Dorsolateral prefrontal cortex (tissue), 120 donors: ENCODE measurements at regions of chr3 and their contacts with region 1.

Region 1: GRCh38 chr3:52238761-52239701 is at the start of gene TWF2:
- DNase-seq: peak; percentile 62 to 92 (median 82)
- H3K4me3 ChIP-seq: peak within 1 kb of the TSS; percentile 75 to 99 (median 94)
- H3K27ac ChIP-seq: peak within 1 kb of the TSS; percentile 65 to 97 (median 91)
- H3K27me3 ChIP-seq: no peaks in the 10 kb centered on the region
- CTCF ChIP-seq: peak in 48 of 56 donors; percentile 13 to 55 (median 40)
- total RNA-seq, gene TWF2: 20.8 to 63.7 (median 47.3) TPM

Region 2: DNA sequence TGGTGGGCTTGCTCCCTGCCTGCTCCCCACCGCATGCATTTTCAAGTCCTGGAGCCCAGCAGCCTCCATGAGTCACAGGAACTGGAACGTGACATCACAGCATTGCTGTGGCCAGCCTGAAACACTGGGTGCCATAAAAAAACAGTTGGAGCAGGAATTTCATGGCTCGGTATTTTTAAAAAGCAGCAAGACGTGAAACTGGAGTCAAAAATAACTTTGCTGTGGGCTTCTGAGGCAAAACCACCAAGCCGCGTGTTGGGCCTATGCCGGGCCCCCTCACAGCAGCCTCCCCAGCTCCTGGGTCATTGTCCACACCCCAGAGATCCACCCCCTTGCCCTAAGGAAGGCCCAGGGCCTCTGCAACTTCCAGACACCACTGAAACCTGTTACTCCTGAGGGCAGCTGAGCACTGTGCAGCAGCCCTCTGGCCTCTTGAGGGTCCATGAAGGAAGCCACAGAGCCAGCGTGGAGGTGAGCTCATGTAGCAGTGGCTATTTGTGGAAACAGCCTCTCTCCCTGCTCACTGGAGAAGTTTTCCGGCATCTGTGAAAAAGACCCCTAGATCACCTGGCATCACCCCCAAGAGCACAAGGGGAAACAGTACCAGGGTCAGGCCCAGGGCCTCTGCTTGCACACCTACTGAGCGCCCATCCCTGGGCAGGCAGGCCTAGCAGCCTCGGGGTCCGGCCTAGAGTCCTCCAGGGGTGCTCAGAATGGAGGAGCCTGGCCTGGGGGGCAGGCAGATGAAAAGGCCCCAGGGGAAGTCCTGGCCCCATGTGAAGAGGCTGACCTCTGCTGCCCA is 148.7 kb before region 1 on chr3:
- intact Hi-C with region 1: no loop called
- DNase-seq: peak in 4 of 10 donors; percentile 37 to 77 (median 63)
- H3K4me3 ChIP-seq: no peak overlapping the region
- H3K27ac ChIP-seq: peak overlapping the region; percentile 11 to 93 (median 80)
- H3K27me3 ChIP-seq: no peaks in the 10 kb centered on the region
- CTCF ChIP-seq: no peak

Region 3: GRCh38 chr3:52121464-52121805 is 117.6 kb before region 1 on chr3:
- intact Hi-C with region 1: no loop called
- DNase-seq: no peak
- H3K4me3 ChIP-seq: no peak overlapping the region
- H3K27ac ChIP-seq: peak overlapping the region in 45 of 59 donors; percentile 21 to 98 (median 92)
- H3K27me3 ChIP-seq: no peaks in the 10 kb centered on the region
- CTCF ChIP-seq: no peak

Region 4: GRCh38 chr3:52181543-52181942 is 57.5 kb before region 1 on chr3:
- intact Hi-C with region 1: no loop called
- DNase-seq: no peak
- H3K4me3 ChIP-seq: no peak overlapping the region
- H3K27ac ChIP-seq: no peak overlapping the region
- H3K27me3 ChIP-seq: no peaks in the 10 kb centered on the region
- CTCF ChIP-seq: no peak

Region 5: GRCh38 chr3:52278510-52279069 is 39.6 kb after region 1 on chr3 and contains the start of gene WDR82:
- intact Hi-C with region 1: loop called (anchors 2 to 5 kb)
- DNase-seq: peak; percentile 91 to 99 (median 98)
- H3K4me3 ChIP-seq: peak within 1 kb of the TSS; percentile 70 to 99 (median 93)
- H3K27ac ChIP-seq: peak within 1 kb of the TSS; percentile 86 to 99 (median 96)
- H3K27me3 ChIP-seq: no peaks in the 10 kb centered on the region
- CTCF ChIP-seq: peak in 51 of 56 donors; percentile 24 to 69 (median 46)
- total RNA-seq, gene WDR82: 61.0 to 123 (median 91.2) TPM

Region 6: GRCh38 chr3:52313774-52314188 is 74.8 kb after region 1 on chr3:
- intact Hi-C with region 1: no loop called
- DNase-seq: no peak
- H3K4me3 ChIP-seq: no peak overlapping the region
- H3K27ac ChIP-seq: peak overlapping the region in 16 of 59 donors; percentile 8 to 57 (median 31)
- H3K27me3 ChIP-seq: no peaks in the 10 kb centered on the region
- CTCF ChIP-seq: no peak